MCF 10A (cell line): ENCODE measurements at regions of chr12 and their contacts with region 1.

Region 1: DNA sequence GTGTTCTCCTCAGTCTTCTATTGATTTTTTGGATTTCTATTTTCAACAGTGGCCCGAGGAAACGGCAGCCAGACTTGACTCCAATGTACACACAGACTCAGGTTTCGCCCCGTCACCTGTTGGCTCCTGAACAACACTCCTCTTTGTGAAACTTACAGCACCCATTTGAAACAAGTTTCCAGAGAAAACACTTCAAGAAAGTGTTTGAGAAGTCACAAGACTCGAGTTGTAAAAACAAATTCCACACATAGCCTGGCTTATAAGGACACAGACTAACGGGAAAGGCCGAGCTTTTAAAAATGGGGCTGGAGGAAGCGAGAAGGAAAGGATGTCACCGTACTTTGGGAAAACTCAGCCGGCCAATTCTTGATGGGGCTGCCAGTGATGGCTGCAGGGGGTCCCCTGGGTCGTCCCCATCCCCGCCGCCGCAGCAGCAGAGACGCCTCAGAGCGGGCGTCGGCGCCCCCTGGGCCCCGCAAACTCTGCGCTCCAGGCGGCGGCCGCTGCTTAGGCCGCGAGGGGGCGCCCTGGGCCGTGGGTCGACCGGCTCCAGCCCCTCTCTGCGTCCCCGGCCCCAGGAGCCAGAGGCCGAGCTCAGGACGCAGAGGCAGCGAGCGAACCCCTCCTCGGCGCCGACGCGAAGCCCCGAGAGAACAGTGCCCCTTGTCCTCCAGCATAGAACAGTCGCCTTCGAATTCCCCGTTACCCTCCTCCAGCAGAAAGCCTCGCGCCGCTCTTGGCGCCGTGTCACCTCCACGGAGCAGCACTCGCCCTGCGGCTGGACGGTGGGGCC is 106.9 kb downstream of the PRICKLE1 start:
- DNase-seq: peak; percentile 61
- H3K4me3 Mint-ChIP-seq: peak overlapping the region; percentile 91
- H3K27ac Mint-ChIP-seq: no peak overlapping the region
- H3K4me1 Mint-ChIP-seq: peaks cover 8% of the 10 kb centered on the region
- H3K27me3 Mint-ChIP-seq: no peaks in the 10 kb centered on the region
- CTCF ChIP-seq: peak; percentile 82

Region 2: DNA sequence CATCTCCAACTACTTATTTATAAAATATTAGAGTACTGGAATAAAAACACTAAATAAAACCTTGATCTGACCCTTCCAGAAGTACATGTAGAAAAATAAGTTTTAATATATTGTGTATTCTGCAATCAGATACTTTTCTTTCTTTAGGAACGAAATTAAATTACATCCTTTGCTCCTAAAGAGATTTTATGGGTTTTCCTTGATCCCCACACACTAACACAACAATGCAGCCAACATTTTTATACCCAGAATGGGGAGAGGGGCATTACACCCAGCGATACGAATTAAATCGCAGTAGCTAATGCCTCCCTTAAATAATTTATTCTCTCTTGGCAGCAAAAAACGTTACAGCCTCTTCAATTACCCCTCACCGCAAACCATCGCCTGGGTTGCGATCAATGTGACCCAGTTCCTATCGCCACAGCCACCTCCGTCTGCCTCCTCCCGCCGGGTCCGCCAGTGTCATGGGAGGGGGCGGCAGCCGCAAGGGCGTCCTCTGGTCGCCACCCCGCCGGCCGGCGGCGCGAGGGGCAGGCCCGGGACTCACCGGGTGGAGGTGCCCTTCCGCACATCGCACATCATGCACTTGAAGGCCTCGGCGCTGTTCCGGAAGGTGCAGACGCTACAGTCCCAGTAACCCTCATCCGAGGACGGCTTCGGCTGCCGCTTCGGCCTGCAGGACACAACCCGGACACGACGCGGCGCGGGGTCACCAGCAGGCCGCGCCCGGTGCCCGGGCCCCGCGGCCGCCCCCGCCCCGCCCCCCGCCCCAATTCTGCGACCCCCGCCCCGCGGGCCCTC is 245.4 kb before region 1 on chr12:
- CTCF ChIA-PET with region 1: no interaction called
- POLR2A ChIA-PET with region 1: no interaction called
- intact Hi-C with region 1: loop called (anchors 5 kb)
- DNase-seq: peak; percentile 72
- H3K4me3 Mint-ChIP-seq: peak overlapping the region; percentile 95
- H3K27ac Mint-ChIP-seq: peak overlapping the region; percentile 97
- H3K4me1 Mint-ChIP-seq: peaks cover 19% of the 10 kb centered on the region
- H3K27me3 Mint-ChIP-seq: no peaks in the 10 kb centered on the region
- CTCF ChIP-seq: peak; percentile 26

Region 3: GRCh38 chr12:42469355-42470175 is 13.1 kb before region 1 on chr12:
- CTCF ChIA-PET with region 1: interaction called, 36 read pairs
- POLR2A ChIA-PET with region 1: no interaction called
- intact Hi-C with region 1: no loop called
- DNase-seq: no peak
- H3K4me3 Mint-ChIP-seq: no peak overlapping the region
- H3K27ac Mint-ChIP-seq: no peak overlapping the region
- H3K4me1 Mint-ChIP-seq: peaks cover 4% of the 10 kb centered on the region
- H3K27me3 Mint-ChIP-seq: no peaks in the 10 kb centered on the region
- CTCF ChIP-seq: no peak

Region 4: GRCh38 chr12:42568952-42569915 is 86.6 kb after region 1 on chr12:
- CTCF ChIA-PET with region 1: interaction called, 48 read pairs
- POLR2A ChIA-PET with region 1: interaction called, 3 read pairs
- intact Hi-C with region 1: loop called (anchors 1 kb)
- DNase-seq: peak; percentile 58
- H3K4me3 Mint-ChIP-seq: no peak overlapping the region
- H3K27ac Mint-ChIP-seq: no peak overlapping the region
- H3K4me1 Mint-ChIP-seq: peaks cover 6% of the 10 kb centered on the region
- H3K27me3 Mint-ChIP-seq: no peaks in the 10 kb centered on the region
- CTCF ChIP-seq: peak; percentile 57

Region 5: DNA sequence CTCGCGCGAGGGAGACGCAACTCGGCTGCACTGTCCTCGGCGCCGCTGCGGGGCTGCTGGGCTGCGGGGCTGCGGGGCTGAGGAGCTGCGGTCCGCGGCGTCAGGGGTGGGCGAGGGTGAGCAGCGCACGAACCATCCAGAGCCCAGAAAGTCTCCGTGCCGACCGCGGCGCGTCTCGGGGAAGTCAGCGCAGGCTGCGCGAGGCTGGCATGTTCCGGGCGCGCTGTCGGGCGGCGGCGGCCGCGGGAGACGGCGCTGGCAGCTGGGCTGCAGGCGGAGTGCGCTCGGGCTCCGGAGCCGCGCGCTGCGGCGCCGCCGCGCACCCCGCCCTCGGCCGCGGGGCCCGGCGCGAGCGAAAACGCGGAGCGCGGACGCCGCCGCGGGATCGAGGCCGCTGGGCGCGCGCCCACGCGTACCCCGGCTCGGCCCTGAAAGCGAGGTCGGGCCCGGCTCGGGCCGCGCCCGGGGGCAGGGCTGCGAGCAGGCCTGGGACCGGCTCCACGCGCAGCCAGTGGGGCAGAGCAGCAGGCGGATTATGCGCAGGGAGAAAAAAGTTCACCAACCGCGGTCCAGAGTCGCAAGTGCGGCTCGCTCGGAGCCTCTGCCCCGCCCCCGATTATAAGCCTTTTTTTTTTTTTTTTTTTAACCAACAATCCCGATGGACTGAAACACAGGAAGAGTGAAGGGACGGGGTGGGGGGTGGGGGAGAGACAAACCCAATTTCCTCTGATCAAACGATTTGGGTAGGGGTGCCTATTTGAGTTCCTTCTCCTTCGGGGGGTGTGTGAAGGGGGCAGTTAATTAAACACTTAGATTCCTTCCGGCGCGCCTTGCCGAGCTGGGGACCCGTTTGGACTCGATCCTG is 107.1 kb after region 1 on chr12 and contains the start of gene PRICKLE1:
- CTCF ChIA-PET with region 1: interaction called, 4 read pairs
- POLR2A ChIA-PET with region 1: no interaction called
- intact Hi-C with region 1: loop called (anchors 5 kb)
- DNase-seq: peak; percentile 54
- H3K4me3 Mint-ChIP-seq: peak within 1 kb of the TSS; percentile 81
- H3K27ac Mint-ChIP-seq: peak within 1 kb of the TSS; percentile 76
- H3K4me1 Mint-ChIP-seq: peaks cover 30% of the 10 kb centered on the region
- H3K27me3 Mint-ChIP-seq: no peaks in the 10 kb centered on the region
- CTCF ChIP-seq: no peak
- total RNA-seq, gene PRICKLE1: 7.9 and 14.1 TPM in 2 replicates

Region 6: GRCh38 chr12:42846782-42847181 is 364.1 kb after region 1 on chr12:
- CTCF ChIA-PET with region 1: no interaction called
- POLR2A ChIA-PET with region 1: no interaction called
- intact Hi-C with region 1: no loop called
- DNase-seq: peak; percentile 36
- H3K4me3 Mint-ChIP-seq: no peak overlapping the region
- H3K27ac Mint-ChIP-seq: no peak overlapping the region
- H3K4me1 Mint-ChIP-seq: no peaks in the 10 kb centered on the region
- H3K27me3 Mint-ChIP-seq: no peaks in the 10 kb centered on the region
- CTCF ChIP-seq: no peak

Region 7: DNA sequence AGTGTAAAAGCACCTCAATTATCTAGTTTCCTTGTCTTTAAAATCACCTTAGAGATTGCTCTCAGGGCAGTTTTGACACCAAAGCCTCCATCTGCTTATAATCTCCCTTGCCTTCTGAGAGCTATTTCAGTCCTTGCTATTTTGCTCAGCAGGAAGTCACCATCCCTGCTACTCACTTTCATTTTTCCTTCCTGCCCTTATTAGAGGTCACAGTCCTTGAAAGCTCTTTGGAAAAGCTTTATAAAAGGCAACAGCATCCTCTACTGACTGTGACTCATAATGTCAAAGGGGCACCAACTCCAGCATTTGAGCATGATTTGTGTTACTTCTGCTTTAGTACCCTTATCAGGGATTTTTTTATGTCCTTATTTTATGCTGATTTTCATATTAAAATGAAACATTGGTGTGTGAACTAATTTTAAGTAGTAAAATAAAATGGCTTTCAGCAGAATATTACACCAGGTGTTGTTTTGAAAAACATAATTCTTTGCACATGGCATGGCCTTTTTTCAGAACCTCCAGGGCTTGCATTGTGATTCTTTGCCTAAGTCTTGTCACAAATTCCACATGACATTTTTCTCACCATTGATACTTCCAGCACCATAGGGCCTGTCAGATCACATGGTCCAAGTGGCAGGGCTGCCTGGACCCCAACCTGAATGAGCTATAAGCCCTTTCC is 856.3 kb after region 1 on chr12:
- CTCF ChIA-PET with region 1: interaction called, 5 read pairs
- POLR2A ChIA-PET with region 1: interaction called, 5 read pairs
- intact Hi-C with region 1: loop called (anchors 1 kb)
- DNase-seq: peak; percentile 64
- H3K4me3 Mint-ChIP-seq: no peak overlapping the region
- H3K27ac Mint-ChIP-seq: no peak overlapping the region
- H3K4me1 Mint-ChIP-seq: peaks cover 12% of the 10 kb centered on the region
- H3K27me3 Mint-ChIP-seq: no peaks in the 10 kb centered on the region
- CTCF ChIP-seq: peak; percentile 55